Activated T-helper 1 cell treated with anti-CD3 and anti-CD28 coated beads, Interleukin-12 subunit alpha, Interleukin-12 subunit beta, Interleukin-2, Interleukin-4 antibody, amounts not matched to agents 30 ng/mL and 10 ng/mL and 1 ng/mL, durations not matched to agents 14 hours and 24 hours and 36 hours (primary cell): ENCODE measurements at regions of chr7 and their contacts with region 1.

Region 1: DNA sequence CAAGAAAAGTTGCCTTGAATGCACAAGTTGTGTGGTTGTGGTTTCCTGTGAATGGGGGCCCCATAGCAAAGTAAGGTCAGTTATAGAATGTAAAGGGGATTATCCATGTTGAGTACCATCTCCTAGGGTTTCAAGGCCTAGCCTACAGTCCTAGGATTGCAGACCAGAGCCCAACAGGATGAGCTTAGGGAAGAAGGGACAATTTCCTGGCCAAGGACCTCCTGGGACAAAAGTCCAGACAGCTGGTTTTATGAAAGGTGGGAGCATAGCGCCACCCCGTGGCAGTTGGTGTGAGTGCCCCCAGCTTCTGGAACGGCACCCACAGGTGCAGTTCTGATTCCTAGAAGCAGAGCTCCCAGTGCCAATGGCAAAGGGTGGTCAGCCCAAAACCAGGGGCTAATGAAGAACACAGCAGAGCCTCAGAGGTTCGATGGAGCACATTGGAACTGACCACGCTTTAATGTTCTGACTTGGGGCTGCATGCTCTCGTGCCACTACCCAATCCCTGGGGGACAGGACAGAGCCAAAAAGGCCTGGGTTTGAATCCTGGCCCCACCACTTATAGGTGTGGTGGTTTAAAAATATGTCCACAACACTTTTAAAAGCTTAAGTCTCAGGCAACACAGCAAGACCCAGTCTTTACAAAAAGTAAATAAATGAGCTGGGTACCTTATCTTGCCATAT is 25.8 kb upstream of the TMEM120A start:
- DNase-seq: peak; percentile 53
- H3K4me3 Mint-ChIP-seq: no peak overlapping the region
- H3K27ac Mint-ChIP-seq: peak overlapping the region; percentile 35
- H3K4me1 Mint-ChIP-seq: peaks cover 15% of the 10 kb centered on the region
- H3K27me3 Mint-ChIP-seq: no peaks in the 10 kb centered on the region

Region 2: GRCh38 chr7:75866489-75867389 is 153.4 kb before region 1 on chr7:
- intact Hi-C with region 1: loop called (anchors 1 kb)
- DNase-seq: no peak
- H3K4me3 Mint-ChIP-seq: no peak overlapping the region
- H3K27ac Mint-ChIP-seq: no peak overlapping the region
- H3K4me1 Mint-ChIP-seq: peaks cover 24% of the 10 kb centered on the region
- H3K27me3 Mint-ChIP-seq: peaks cover 8% of the 10 kb centered on the region

Region 3: DNA sequence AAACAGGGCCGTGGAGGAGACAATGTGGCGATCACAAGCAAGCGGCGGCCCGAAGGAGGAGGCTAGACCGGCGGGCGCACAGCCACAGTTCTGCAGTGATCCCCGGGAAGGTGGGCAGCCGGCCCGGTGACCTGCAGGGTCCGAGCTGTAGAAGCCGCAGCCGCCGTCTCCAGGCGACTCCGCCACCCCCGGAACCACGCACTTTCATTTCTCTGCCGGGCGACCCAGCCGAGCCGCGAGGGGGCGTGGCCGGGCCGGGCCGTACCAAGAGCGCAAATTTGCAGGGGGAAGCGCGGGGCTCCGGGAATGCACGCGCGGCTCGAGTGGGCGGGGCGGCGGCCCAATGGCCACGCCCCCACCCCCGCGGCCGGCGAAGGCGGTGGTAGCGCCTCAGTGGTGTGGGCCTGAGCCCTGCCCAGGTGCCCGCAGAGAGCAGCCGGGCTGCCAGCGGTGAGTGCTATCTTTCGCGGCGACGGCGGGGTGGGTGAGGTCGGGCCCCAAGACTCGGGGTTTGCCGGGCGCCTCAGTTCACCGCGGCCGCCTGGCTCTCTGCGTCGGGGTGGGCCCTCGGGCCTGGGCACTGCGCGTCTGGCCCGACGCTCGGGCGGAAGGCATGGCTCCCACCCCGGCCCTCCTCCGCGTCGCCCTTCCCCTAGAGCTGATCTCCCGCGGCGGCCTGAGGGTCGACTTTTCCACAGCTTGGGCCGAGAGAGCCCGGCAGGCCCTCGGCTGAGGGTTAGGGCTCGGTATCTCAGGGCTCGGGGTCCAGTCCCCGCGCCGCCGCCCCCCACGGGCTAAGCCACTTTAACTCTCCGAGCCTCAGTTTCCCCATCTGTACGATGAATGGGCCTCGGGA is 105.2 kb before region 1 on chr7 and contains the start of gene POR:
- intact Hi-C with region 1: loop called (anchors 1 kb)
- DNase-seq: peak; percentile 97
- H3K4me3 Mint-ChIP-seq: peak within 1 kb of the TSS; percentile 91
- H3K27ac Mint-ChIP-seq: peak within 1 kb of the TSS; percentile 86
- H3K4me1 Mint-ChIP-seq: peaks cover 35% of the 10 kb centered on the region
- H3K27me3 Mint-ChIP-seq: peaks cover 3% of the 10 kb centered on the region
- total RNA-seq, gene POR: 84.4 and 91.2 TPM in 2 replicates

Region 4: GRCh38 chr7:75994388-75995051 is 25.7 kb before region 1 on chr7 and contains the start of gene TMEM120A:
- intact Hi-C with region 1: loop called (anchors 1 kb)
- DNase-seq: peak; percentile 93
- H3K4me3 Mint-ChIP-seq: peak within 1 kb of the TSS; percentile 84
- H3K27ac Mint-ChIP-seq: peak within 1 kb of the TSS; percentile 18
- H3K4me1 Mint-ChIP-seq: peaks cover 25% of the 10 kb centered on the region
- H3K27me3 Mint-ChIP-seq: no peaks in the 10 kb centered on the region
- total RNA-seq, gene TMEM120A: 44.3 and 49.9 TPM in 2 replicates

Region 5: DNA sequence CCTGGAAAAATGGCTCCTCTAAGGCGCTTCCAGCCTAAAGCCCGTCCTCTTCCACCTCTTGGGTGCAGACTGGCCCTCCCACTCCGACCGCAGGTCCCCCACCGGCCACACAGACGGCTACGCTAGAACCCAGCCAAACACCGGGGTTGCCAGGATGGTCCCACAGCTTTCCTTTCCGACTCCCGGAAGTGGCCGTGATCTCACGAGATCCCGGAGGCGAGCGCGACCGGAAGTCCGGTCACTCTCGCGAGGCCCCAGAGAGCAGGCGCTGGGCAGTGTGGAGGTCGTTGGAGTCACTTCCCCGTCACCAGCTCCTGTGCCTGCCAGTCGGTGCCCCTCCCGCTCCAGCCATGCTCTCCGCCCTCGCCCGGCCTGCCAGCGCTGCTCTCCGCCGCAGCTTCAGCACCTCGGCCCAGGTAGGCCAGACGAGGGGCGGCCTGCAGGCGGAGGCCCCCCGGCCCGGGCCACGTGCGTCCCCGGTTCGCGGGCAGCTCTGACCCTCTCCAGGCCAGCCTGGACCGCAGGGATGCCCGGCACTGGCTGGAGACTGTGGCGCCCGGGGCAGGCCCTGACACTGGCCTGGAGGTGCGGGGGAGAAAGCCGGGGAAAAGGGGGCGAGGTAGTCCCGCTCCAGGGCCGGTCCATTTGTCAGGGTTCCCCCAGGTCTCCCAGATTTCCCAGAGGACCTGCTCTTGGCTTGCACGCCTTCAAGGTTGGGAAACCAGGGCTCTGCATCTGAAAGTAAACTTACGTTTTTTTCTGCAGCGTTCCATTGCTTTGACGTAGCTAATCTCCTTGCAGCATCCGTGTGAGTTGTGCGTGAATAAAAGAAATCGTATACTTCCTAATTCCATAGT is 27.9 kb after region 1 on chr7 and contains the starts of genes MDH2 and STYXL1:
- intact Hi-C with region 1: no loop called
- DNase-seq: peak; percentile 90
- H3K4me3 Mint-ChIP-seq: peak within 1 kb of the TSS; percentile 99
- H3K27ac Mint-ChIP-seq: peak within 1 kb of the TSS; percentile 97
- H3K4me1 Mint-ChIP-seq: peaks cover 53% of the 10 kb centered on the region
- H3K27me3 Mint-ChIP-seq: no peaks in the 10 kb centered on the region
- total RNA-seq, gene MDH2: 249 and 292 TPM in 2 replicates
- total RNA-seq, gene STYXL1: 35.3 and 38.7 TPM in 2 replicates